ENCODE measurements at regions of chr11 and their contacts with region 1.

Region 1: GRCh38 chr11:45436118-45436517 is 150.0 kb upstream of the SYT13 start:
- DNase-seq: no peak
- ATAC-seq: no peak
- H3K4me3 ChIP-seq: no peak overlapping the region
- H3K27ac ChIP-seq: no peak overlapping the region
- H3K4me1 ChIP-seq: no peaks in the 10 kb centered on the region
- H3K27me3 ChIP-seq: peaks cover 22% of the 10 kb centered on the region
- CTCF ChIP-seq: no peak

Region 2: DNA sequence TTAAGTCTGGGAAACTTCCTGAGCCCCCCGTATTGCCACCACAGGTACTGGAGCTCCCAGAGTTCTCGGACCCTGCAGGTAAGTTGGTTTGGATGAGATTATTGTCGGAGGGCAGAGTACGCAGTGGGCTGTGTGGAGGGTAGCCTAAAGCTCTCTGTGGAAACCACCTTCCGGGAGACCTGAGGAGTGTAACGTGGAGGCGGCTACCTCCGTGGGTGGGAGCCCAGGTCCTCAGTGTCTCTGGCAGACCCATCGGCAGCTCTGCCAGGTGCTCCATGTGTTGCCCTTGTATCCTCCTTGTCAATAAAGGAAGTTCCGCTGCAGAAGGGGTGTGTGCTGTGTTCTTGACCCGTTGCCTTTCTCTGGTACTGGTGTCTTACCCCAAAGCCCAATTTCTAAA is 211.4 kb before region 1 on chr11:
- CTCF ChIA-PET with region 1: no interaction called
- POLR2A ChIA-PET with region 1: interaction called, 11 read pairs
- in situ Hi-C with region 1: no loop called
- intact Hi-C with region 1: no loop called
- DNase-seq: no peak
- ATAC-seq: no peak
- H3K4me3 ChIP-seq: no peak overlapping the region
- H3K27ac ChIP-seq: no peak overlapping the region
- H3K4me1 ChIP-seq: no peaks in the 10 kb centered on the region
- H3K27me3 ChIP-seq: no peaks in the 10 kb centered on the region
- CTCF ChIP-seq: no peak

Measured in Panc1 (cell line).